Left ventricle myocardium inferior (tissue), 1 donor: ENCODE measurements at regions of chr6 and their contacts with region 1.

Region 1: DNA sequence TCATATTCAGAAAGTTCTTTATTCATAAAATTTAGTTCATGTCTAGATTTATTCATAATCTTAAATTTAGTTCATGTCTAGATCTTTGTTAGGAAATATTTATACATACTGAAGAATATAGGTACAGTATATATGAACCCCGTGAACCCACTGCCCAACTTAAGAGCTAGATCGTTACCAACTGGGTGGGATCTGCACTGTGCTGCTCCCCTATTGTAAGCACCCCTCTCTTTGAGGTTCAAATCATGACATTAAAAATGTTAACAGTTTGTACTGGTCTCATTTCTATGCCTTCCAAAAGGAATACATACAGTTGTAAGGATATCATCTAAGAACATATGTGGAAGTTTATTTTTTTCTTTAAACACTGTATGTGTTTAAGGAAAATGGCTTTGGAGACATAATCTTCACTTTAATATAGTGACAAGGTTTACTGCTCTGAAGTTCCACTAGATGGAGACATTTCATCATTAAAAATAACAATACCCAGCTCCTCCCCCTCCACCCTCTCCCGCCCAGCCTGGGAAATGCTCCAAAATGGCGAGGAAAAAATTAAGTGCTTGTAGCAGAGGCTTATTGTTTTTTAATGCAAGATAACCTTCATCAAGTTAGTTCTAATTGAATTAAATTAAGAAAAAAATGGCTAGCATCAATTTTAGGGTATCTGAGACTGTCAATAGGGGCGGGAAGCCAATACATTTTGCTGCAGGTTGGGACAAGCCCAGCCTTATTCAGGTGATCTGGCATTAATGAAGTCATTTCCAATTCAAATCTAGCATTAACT is 104.1 kb upstream of the TRAF3IP2 start:
- DNase-seq: no peak
- H3K4me3 ChIP-seq: peak overlapping the region; percentile 45
- H3K27ac ChIP-seq: peak overlapping the region; percentile 67
- H3K4me1 ChIP-seq: peaks cover 39% of the 10 kb centered on the region
- H3K27me3 ChIP-seq: no peaks in the 10 kb centered on the region
- CTCF ChIP-seq: peak; percentile 86

Region 2: GRCh38 chr6:111580826-111581505 is 128.8 kb before region 1 on chr6:
- intact Hi-C with region 1: no loop called
- DNase-seq: no peak
- H3K4me3 ChIP-seq: no peak overlapping the region
- H3K27ac ChIP-seq: peak overlapping the region; percentile 71
- H3K4me1 ChIP-seq: peaks cover 60% of the 10 kb centered on the region
- H3K27me3 ChIP-seq: no peaks in the 10 kb centered on the region
- CTCF ChIP-seq: no peak

Region 3: GRCh38 chr6:111625461-111626391 is 84.1 kb before region 1 on chr6:
- intact Hi-C with region 1: no loop called
- DNase-seq: no peak
- H3K4me3 ChIP-seq: peak overlapping the region; percentile 48
- H3K27ac ChIP-seq: peak overlapping the region; percentile 81
- H3K4me1 ChIP-seq: peaks cover 50% of the 10 kb centered on the region
- H3K27me3 ChIP-seq: no peaks in the 10 kb centered on the region
- CTCF ChIP-seq: no peak

Region 4: GRCh38 chr6:111873178-111874024 is 163.6 kb after region 1 on chr6 and contains the start of gene FYN:
- intact Hi-C with region 1: loop called (anchors 10 kb)
- DNase-seq: peak; percentile 99
- H3K4me3 ChIP-seq: peak within 1 kb of the TSS; percentile 87
- H3K27ac ChIP-seq: peak within 1 kb of the TSS; percentile 91
- H3K4me1 ChIP-seq: peaks cover 54% of the 10 kb centered on the region
- H3K27me3 ChIP-seq: no peaks in the 10 kb centered on the region
- CTCF ChIP-seq: peak; percentile 70
- total RNA-seq, gene FYN: 46.3 TPM

Region 5: GRCh38 chr6:111894272-111894671 is 184.5 kb after region 1 on chr6:
- intact Hi-C with region 1: no loop called
- DNase-seq: no peak
- H3K4me3 ChIP-seq: no peak overlapping the region
- H3K27ac ChIP-seq: no peak overlapping the region
- H3K4me1 ChIP-seq: peaks cover 4% of the 10 kb centered on the region
- H3K27me3 ChIP-seq: no peaks in the 10 kb centered on the region
- CTCF ChIP-seq: no peak

Region 6: DNA sequence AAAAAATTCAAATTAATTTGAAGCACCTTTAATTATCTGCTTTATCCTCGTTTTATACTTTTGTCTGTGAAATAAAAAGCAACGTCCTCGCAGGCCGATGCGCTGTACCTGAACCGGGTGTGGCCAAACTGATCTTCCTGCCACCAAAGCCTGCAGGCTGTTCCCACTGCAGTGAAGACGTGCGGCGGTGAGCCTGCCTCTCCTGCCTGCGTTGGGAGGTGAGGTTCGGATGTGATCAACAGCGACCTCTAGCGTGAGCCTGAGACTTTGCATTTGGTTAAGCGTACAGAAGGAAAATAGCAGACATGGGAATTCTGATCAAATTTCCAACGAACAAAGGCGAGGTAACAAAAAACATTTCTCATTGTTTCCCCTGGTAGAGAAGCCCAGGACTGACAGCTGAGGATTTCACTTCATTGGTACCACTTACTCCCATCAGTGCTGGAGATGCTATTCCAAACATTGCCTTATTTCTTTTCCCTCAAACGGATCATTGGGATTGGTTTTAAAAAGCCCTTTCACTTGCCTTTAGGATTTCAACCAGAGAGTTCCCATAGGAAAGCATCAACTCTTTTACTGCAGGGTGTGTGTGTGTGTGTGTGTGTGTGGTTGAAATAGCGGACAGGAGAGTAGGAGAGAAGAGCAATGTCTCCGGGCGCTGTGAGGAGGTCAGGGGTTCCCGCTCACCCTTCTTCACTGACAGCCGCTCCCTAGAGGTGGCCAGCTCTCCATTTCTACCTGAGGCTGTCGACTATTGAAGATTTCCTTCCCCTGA is 287.5 kb after region 1 on chr6:
- intact Hi-C with region 1: loop called (anchors 2 kb)
- DNase-seq: peak; percentile 74
- H3K4me3 ChIP-seq: peak overlapping the region; percentile 42
- H3K27ac ChIP-seq: peak overlapping the region; percentile 62
- H3K4me1 ChIP-seq: no peaks in the 10 kb centered on the region
- H3K27me3 ChIP-seq: no peaks in the 10 kb centered on the region
- CTCF ChIP-seq: peak; percentile 96

Region 7: GRCh38 chr6:112043032-112044007 is 333.5 kb after region 1 on chr6:
- intact Hi-C with region 1: loop called (anchors 2 kb)
- DNase-seq: peak; percentile 86
- H3K4me3 ChIP-seq: peak overlapping the region; percentile 70
- H3K27ac ChIP-seq: peak overlapping the region; percentile 71
- H3K4me1 ChIP-seq: peaks cover 6% of the 10 kb centered on the region
- H3K27me3 ChIP-seq: no peaks in the 10 kb centered on the region
- CTCF ChIP-seq: peak; percentile 92

Region 8: DNA sequence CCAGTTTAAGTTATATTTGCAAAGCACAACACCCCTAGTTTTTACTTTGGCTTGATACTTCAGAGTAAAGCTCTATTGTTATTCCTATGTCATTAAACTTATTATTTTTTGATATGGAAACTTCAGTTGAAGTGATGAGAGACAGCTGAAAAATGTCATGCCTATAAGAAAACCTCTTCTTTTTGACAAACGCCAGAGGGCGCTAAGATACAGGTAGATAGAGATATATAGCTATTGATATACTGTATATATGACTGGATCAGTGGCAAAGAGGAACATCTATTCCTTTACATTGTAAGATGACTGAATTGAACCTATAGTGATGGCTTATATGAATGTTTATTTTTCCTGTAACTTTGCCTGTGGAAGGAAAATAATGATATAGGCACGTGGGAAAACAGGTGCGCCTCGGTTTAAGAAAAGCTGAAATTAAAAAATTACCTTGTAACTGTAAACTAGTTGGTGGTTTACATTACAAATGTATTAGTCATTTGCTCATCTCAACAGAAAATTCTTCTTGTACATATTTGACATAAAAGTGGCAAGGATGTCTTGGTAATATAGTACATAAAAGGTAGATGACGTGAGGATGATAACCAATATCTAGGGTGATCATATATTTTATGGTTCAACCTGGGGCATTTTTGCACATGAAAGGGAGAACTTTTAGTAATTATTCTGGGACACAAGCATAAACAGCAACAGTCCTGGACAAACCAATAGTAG is 470.5 kb after region 1 on chr6:
- intact Hi-C with region 1: no loop called
- DNase-seq: no peak
- H3K4me3 ChIP-seq: no peak overlapping the region
- H3K27ac ChIP-seq: peak overlapping the region; percentile 33
- H3K4me1 ChIP-seq: peaks cover 23% of the 10 kb centered on the region
- H3K27me3 ChIP-seq: no peaks in the 10 kb centered on the region
- CTCF ChIP-seq: peak; percentile 82